A673 (cell line): ENCODE measurements at regions of chrX and their contacts with region 1.

Region 1: GRCh38 chrX:131752489-131753198 is 208.8 kb downstream of the OR13H1 start:
- DNase-seq: peak; percentile 89
- H3K4me3 ChIP-seq: peak overlapping the region; percentile 47
- H3K27ac ChIP-seq: peak overlapping the region; percentile 75
- H3K4me1 ChIP-seq: peaks cover 3% of the 10 kb centered on the region
- H3K27me3 ChIP-seq: no peaks in the 10 kb centered on the region
- CTCF ChIP-seq: peak; percentile 40

Region 2: GRCh38 chrX:131728295-131729145 is 24.1 kb before region 1 on chrX:
- CTCF ChIA-PET with region 1: no interaction called
- POLR2A ChIA-PET with region 1: no interaction called
- intact Hi-C with region 1: loop called (anchors 1 kb)
- DNase-seq: peak; percentile 87
- H3K4me3 ChIP-seq: peak overlapping the region; percentile 51
- H3K27ac ChIP-seq: peak overlapping the region; percentile 91
- H3K4me1 ChIP-seq: no peaks in the 10 kb centered on the region
- H3K27me3 ChIP-seq: no peaks in the 10 kb centered on the region
- CTCF ChIP-seq: peak; percentile 53

Region 3: DNA sequence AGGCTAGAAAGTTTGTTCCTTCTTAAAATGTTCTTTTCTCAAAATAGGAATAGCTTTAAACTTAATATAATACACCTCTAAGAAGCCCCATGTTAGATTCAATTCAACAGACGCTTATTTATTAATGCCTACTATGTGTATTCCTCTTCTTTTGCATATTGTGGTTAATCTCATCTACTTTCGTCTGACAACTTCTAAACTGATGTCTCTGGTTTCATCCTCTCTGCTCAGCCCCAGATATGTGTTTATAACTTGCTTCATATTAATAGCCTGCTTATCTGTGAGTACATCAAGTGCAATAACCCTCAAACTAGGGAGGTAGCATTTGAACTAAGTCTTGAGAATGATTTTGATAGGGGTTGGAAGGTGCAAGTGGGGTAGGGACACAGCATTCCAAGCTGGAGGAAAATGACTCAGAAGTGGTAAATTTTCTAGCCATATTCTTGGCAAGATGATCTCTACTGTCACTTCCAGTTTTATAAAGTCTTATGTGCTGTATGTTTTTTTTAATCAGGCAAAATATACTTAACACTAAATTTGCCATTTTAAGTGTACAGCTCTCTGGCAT is 307.4 kb after region 1 on chrX:
- CTCF ChIA-PET with region 1: no interaction called
- POLR2A ChIA-PET with region 1: no interaction called
- intact Hi-C with region 1: no loop called
- DNase-seq: no peak
- H3K4me3 ChIP-seq: no peak overlapping the region
- H3K27ac ChIP-seq: no peak overlapping the region
- H3K4me1 ChIP-seq: no peaks in the 10 kb centered on the region
- H3K27me3 ChIP-seq: no peaks in the 10 kb centered on the region
- CTCF ChIP-seq: no peak